ENCODE measurements at regions of chr17 and their contacts with region 1.

Region 1: DNA sequence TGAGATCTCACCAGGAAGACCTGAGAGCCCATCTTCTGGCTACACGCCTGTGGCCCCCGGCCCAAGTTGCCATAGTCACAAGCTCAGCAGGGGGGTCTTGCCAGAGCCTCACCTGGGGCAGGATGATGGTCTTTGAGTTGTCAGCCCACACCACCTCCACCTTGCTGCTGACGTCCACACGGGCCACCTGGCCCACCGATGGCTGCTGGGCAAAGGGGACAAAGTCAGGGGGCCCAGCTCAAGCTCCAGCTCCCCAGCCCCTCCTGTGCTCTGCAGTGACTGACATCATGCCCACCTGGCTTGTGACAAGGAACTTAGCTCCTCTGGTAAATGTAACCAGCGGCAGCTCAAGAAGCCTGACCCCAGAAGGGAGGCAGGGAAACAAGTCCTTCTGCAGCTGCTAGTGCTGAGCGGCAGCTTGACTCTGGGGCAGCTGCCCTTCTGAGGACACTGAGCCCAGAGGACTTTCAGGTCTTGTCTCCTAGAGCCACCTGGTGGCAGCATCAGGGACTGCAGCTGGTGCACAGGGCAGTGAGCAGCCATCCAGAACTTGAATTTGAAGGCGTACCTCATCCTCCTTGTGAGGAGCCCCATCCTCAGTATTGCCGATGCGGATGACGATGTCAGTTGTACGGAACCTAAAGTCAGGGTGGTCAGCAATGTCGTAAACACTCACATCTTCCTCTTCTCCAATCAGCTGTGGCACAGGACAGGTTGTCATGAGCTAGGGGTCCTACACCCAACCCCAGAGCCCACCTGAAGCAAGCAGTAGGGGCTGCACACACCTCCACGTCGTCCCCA is 13.5 kb downstream of the SPHK1 start:
- DNase-seq: no peak
- H3K4me3 ChIP-seq: no peak overlapping the region
- CTCF ChIP-seq: peak; percentile 93

Region 2: GRCh38 chr17:76246080-76247066 is 151.5 kb before region 1 on chr17:
- CTCF ChIA-PET with region 1: no interaction called
- POLR2A ChIA-PET with region 1: no interaction called
- DNase-seq: no peak
- H3K4me3 ChIP-seq: no peak overlapping the region
- CTCF ChIP-seq: no peak

Region 3: GRCh38 chr17:76296186-76296585 is 101.7 kb before region 1 on chr17:
- CTCF ChIA-PET with region 1: interaction called, 851 read pairs
- POLR2A ChIA-PET with region 1: no interaction called
- DNase-seq: no peak
- H3K4me3 ChIP-seq: no peak overlapping the region
- CTCF ChIP-seq: no peak

Region 4: GRCh38 chr17:76327696-76328095 is 70.2 kb before region 1 on chr17:
- CTCF ChIA-PET with region 1: interaction called, 25 read pairs
- POLR2A ChIA-PET with region 1: no interaction called
- DNase-seq: no peak
- H3K4me3 ChIP-seq: no peak overlapping the region
- CTCF ChIP-seq: no peak

Region 5: DNA sequence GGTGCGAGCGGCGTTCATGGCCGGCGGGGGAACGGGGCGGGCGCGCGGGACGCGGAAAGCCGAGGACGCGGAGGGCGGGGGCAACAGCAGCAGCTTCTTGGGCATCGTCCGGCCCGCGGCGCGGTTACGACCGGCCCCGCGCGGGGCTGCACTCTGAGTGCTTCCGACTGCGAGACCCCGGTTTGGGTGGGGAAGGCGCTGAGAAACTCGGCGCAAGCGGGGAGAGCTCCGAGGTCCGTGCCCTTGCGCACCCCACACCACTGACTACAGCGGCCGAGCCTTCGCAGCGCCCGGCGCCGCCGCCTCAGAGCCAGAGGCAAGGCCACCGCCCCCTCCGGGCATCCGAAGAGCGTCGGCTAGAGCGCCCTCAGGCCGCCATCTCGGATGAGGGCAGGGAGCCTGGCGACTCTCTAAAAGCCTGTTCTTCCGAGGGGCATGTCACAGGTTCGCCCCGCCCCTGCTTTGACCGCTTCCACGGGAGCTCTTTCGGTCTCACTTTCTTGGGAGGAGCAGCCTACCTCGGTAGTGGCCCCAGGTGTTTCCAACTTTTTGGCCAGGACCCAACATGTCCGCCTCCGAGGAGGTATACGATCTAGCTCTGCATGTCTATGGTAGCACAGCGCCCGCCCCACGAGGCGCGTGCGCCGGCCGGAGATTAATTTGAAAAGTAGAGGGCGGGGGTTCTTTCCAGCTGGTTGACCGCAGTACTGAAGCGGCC is 44.1 kb before region 1 on chr17 and contains the start of gene PRPSAP1:
- CTCF ChIA-PET with region 1: interaction called, 18 read pairs
- POLR2A ChIA-PET with region 1: no interaction called
- DNase-seq: no peak
- H3K4me3 ChIP-seq: peak within 1 kb of the TSS; percentile 90
- CTCF ChIP-seq: peak; percentile 64

Region 6: GRCh38 chr17:76422406-76422805 is 24.5 kb after region 1 on chr17:
- CTCF ChIA-PET with region 1: interaction called, 578 read pairs
- POLR2A ChIA-PET with region 1: no interaction called
- DNase-seq: no peak
- H3K4me3 ChIP-seq: no peak overlapping the region
- CTCF ChIP-seq: no peak

Region 7: DNA sequence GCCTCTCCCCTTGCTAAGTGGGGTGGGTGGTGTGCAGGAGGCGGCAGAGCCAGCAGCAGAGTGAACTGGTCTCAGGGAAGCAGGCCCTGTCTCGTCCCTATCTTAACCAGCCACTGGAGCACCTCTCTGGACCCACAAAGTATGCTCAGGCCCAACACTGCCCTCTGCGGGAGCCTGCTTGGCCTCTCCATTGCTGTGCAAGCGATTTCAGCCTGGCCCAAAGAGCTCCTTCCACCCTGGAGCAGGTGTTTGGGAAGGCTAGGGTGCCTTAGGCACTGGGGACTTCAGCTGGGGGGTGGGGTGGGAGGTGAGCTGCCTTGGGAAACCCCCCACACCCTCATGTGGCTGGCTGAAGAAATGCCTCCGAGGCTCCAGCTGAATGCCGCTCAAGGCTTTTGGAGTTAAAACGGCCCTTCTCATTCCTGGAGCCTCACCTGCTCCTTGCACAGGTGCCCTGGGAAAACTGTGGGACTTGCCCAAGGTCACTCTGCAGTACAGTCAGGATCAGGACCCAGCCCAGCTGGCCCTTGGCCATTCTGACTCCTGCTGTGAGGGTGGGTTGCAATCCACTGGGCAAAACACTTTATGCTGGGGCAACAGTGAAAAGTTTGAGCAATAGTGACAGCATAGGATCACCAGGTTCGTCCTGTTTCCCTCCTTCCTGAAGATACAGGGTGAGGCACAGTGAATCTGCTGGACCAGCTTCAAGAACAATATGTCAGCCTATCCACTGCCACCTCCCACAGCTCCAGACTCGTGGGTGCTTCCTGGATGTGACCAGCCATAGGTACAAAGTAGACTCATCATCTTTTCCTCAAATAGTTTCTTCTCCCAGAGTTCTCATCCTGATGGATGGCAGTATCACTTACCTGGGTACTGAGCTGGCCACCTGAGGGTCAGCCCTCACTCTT is 60.9 kb after region 1 on chr17:
- CTCF ChIA-PET with region 1: interaction called, 36 read pairs
- POLR2A ChIA-PET with region 1: no interaction called
- DNase-seq: no peak
- H3K4me3 ChIP-seq: no peak overlapping the region
- CTCF ChIP-seq: peak; percentile 87

Region 8: DNA sequence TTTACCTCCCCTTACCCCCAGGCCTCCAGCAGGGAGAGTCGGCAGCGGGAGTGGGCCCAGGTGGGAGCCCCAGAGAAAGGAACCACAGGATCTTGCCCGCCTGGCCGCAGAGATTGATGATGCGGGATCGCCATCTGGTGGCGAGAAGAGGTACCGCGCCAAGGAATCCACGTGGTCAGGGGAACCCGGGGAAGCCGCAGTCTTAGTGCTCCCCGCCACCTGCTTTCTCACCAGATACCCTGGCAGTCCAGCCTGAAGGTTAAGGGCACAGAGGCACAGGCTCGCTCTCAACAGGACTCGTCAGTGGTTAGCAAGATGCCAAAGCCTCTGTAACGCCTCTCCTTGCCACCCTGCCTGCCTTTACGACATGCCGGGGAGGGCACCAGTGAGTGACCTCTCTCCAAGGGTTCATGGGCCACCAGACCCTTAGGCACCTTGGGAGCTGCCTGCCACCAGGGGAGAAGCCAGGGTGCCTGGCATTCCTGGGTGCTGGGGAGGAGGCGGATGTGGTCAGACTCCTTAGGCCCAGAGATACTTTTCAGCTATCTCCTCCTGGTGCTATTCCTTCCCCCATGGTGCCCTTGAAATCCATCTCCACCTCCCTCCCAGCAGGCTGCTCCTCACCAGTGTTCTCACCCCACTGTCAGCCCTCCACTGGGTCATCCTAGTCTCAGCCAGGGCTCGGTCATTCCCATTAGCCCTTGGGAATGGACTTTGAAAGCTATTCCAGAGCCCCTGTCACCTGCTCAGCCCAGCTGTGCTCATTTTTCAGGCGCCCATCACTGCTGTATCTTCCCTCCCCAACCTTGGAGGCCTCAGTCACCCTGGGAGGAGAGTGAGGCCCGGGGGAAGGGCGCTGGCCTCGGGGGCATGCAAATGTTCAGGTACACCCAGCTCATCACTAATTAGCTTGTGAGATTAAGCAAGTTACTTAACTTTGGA is 108.8 kb after region 1 on chr17:
- CTCF ChIA-PET with region 1: interaction called, 26 read pairs
- POLR2A ChIA-PET with region 1: no interaction called
- DNase-seq: no peak
- H3K4me3 ChIP-seq: no peak overlapping the region
- CTCF ChIP-seq: peak; percentile 91